ENCODE measurements at regions of chr1 and their contacts with region 1.

Region 1: GRCh38 chr1:177948336-177948972 is 21.4 kb downstream of the SEC16B start:
- DNase-seq: peak; percentile 86
- H3K4me3 Mint-ChIP-seq: no peak overlapping the region
- H3K27ac Mint-ChIP-seq: no peak overlapping the region
- H3K4me1 Mint-ChIP-seq: peaks cover 6% of the 10 kb centered on the region
- H3K27me3 Mint-ChIP-seq: no peaks in the 10 kb centered on the region
- CTCF ChIP-seq: peak; percentile 97

Region 2: GRCh38 chr1:176903474-176903873 is 1045.0 kb before region 1 on chr1:
- CTCF ChIA-PET with region 1: interaction called, 280 read pairs
- POLR2A ChIA-PET with region 1: no interaction called
- intact Hi-C with region 1: no loop called
- DNase-seq: no peak
- H3K4me3 Mint-ChIP-seq: no peak overlapping the region
- H3K27ac Mint-ChIP-seq: no peak overlapping the region
- H3K4me1 Mint-ChIP-seq: peaks cover 7% of the 10 kb centered on the region
- H3K27me3 Mint-ChIP-seq: peaks cover 71% of the 10 kb centered on the region
- CTCF ChIP-seq: no peak

Region 3: DNA sequence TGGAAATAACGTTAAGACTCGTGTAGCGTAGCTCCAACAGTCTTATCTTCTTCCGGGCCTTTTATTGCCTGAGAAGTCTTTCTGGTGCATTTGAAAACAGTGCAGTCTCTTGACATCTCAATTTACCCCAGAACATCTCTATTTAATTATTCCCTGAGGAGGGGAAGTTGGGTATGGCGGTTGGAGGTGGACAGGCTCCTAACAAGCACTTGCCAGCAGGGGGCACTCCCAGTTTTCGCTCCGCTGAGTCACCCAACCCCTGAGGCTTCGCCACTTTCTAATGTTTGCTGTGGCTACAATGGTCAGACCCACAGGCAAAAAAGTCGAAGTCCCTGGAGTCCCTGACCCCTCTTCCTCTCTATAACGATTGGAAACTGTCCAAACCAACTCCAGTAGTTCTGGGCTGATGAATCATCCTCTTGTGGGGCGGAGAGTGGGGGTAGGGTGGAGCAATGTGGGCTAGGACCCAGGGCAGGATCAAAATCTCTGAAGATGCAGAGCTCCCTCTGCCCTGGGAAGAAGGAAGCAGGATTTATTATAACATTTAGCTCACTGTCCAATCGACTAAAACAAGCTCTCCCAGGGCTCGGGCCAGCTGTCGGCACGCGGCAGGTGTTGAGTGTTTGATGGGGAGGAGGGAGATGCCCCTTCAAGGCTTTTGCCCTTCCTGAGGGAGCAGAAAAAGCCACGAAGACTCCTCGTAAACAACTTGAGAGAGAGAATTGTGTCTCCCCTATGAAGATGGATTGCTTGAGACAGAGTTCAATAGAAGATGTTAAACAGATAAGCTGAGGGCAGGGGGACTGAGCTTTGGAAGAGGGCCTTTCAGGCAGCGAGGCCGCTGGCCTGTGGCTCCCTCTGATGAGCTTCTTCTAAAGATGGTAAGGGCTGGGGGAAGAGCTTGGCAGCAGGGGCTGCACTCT is 692.0 kb before region 1 on chr1:
- CTCF ChIA-PET with region 1: interaction called, 5 read pairs
- POLR2A ChIA-PET with region 1: no interaction called
- intact Hi-C with region 1: loop called (anchors 1 kb)
- DNase-seq: peak; percentile 96
- H3K4me3 Mint-ChIP-seq: no peak overlapping the region
- H3K27ac Mint-ChIP-seq: no peak overlapping the region
- H3K4me1 Mint-ChIP-seq: peaks cover 21% of the 10 kb centered on the region
- H3K27me3 Mint-ChIP-seq: no peaks in the 10 kb centered on the region
- CTCF ChIP-seq: peak; percentile 70

Region 4: GRCh38 chr1:177907000-177907399 is 41.5 kb before region 1 on chr1:
- CTCF ChIA-PET with region 1: interaction called, 20 read pairs
- POLR2A ChIA-PET with region 1: no interaction called
- intact Hi-C with region 1: no loop called
- DNase-seq: peak; percentile 39
- H3K4me3 Mint-ChIP-seq: no peak overlapping the region
- H3K27ac Mint-ChIP-seq: no peak overlapping the region
- H3K4me1 Mint-ChIP-seq: no peaks in the 10 kb centered on the region
- H3K27me3 Mint-ChIP-seq: no peaks in the 10 kb centered on the region
- CTCF ChIP-seq: no peak

Region 5: GRCh38 chr1:177937931-177938330 is 10.5 kb before region 1 on chr1:
- CTCF ChIA-PET with region 1: interaction called, 148 read pairs
- POLR2A ChIA-PET with region 1: interaction called, 3 read pairs
- intact Hi-C with region 1: no loop called
- DNase-seq: no peak
- H3K4me3 Mint-ChIP-seq: no peak overlapping the region
- H3K27ac Mint-ChIP-seq: no peak overlapping the region
- H3K4me1 Mint-ChIP-seq: peaks cover 5% of the 10 kb centered on the region
- H3K27me3 Mint-ChIP-seq: no peaks in the 10 kb centered on the region
- CTCF ChIP-seq: no peak

Region 6: GRCh38 chr1:178282949-178283367 is 334.5 kb after region 1 on chr1:
- CTCF ChIA-PET with region 1: interaction called, 80 read pairs
- POLR2A ChIA-PET with region 1: interaction called, 7 read pairs
- intact Hi-C with region 1: loop called (anchors 1 kb)
- DNase-seq: peak; percentile 85
- H3K4me3 Mint-ChIP-seq: no peak overlapping the region
- H3K27ac Mint-ChIP-seq: peak overlapping the region; percentile 28
- H3K4me1 Mint-ChIP-seq: peaks cover 38% of the 10 kb centered on the region
- H3K27me3 Mint-ChIP-seq: no peaks in the 10 kb centered on the region
- CTCF ChIP-seq: peak; percentile 77

Measured in MCF 10A (cell line).